Dendritic cell treated with granulocyte-macrophage colony-stimulating factor and Interleukin-4, amounts not matched to agents 40 ng/mL and 50 ng/mL, for 4 days (primary cell): ENCODE measurements at regions of chr7 and their contacts with region 1.

Region 1: DNA sequence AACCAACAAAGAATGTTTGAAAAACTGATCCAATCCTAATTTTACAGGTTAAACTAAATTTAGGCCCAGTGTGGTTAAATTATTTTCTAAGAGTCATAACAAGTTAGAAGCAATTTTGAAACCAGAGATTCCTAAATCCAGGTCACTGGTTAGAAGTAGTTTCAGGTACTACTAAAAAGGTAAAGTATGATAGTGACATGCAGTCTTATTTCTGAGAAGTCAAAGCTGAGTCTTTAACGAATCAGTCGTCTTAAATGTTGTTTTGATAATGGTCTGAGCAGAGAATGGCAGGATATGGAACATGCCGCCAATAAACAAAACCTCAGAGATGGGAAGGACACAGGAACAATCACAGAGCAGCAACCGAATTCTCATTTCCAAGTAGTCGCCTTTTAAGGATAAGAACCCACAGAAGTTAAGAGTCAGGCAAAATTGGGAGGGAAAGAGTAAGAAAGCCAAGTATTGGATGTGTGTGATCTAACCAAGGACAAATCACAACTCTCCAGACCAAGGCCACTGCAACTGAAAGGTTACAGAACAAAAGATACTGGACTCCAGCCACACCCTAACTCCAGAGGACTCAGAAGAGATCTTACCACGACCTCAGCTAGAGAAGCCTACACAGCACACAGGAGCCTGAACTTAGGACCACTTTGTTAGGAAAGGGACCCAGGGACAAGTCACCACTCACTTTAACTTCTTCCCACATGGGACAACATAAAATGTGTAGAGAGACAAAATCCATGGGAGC is 19.7 kb downstream of the TMEM243 start:
- H3K4me3 Mint-ChIP-seq: no peak overlapping the region
- H3K27ac Mint-ChIP-seq: no peak overlapping the region
- H3K4me1 Mint-ChIP-seq: peaks cover 23% of the 10 kb centered on the region
- H3K27me3 Mint-ChIP-seq: no peaks in the 10 kb centered on the region

Region 2: GRCh38 chr7:87164433-87164832 is 35.4 kb before region 1 on chr7:
- intact Hi-C with region 1: loop called (anchors 5 kb)
- H3K4me3 Mint-ChIP-seq: no peak overlapping the region
- H3K27ac Mint-ChIP-seq: no peak overlapping the region
- H3K4me1 Mint-ChIP-seq: peaks cover 9% of the 10 kb centered on the region
- H3K27me3 Mint-ChIP-seq: no peaks in the 10 kb centered on the region